GM10248 (cell line): ENCODE measurements at regions of chr17 and their contacts with region 1.

Region 1: GRCh38 chr17:42577532-42578281 is at the start of gene PSMC3IP:
- DNase-seq: peak; percentile 98
- CTCF ChIP-seq: peak; percentile 36

Region 2: GRCh38 chr17:42548070-42548837 is 29.5 kb before region 1 on chr17:
- CTCF ChIA-PET with region 1: interaction called, 11 read pairs
- POLR2A ChIA-PET with region 1: no interaction called
- DNase-seq: peak; percentile 93
- CTCF ChIP-seq: peak; percentile 77

Region 3: GRCh38 chr17:42609182-42609813 is 31.6 kb after region 1 on chr17 and contains the starts of genes RETREG3 and TUBG1:
- CTCF ChIA-PET with region 1: interaction called, 120 read pairs
- POLR2A ChIA-PET with region 1: interaction called, 5 read pairs
- DNase-seq: peak; percentile 100
- CTCF ChIP-seq: no peak

Region 4: DNA sequence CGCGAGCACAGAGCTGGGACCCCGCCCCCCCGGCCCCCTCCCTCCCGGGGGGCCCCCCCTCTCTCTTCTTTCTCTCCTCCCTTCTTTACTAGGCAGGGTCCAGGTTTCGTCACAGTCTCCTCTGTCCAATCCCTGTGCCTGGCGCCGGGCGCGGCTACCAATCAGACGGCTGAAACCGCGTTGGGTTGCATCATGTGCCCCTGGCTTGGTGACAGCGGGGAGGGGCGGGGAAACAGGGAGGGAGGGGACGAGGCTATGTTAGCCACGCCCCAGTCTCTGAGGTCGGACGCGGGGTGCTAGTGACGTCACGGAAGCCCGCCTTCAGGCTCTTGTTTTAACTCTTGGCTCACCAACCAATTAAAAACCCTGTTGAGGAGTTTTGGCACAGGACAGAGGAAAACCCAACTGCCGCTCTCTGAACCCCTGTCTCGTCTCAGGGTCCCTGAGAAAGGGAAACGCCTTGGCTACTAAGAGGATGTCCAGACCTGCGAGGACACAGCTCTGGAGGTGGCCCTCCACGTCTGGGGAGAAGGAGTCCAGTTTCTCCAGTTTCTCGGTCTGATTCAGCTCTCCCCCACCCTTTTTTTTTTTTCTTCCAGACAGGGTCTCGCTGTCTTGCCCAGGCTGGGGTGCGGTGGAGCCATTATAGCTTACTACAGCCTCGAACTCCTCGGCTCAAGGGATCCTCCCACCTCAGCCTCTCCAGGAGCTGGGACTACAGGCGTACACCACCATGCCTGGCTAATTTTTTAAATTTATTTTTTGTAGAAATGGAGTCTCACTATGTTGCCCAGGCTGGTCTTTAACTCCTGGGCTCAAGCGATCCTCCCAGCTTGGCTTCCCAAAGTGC is 99.5 kb after region 1 on chr17:
- CTCF ChIA-PET with region 1: interaction called, 97 read pairs
- POLR2A ChIA-PET with region 1: interaction called, 5 read pairs
- DNase-seq: peak; percentile 98
- CTCF ChIP-seq: no peak

Region 5: GRCh38 chr17:42720996-42721583 is 143.4 kb after region 1 on chr17:
- CTCF ChIA-PET with region 1: interaction called, 11 read pairs
- POLR2A ChIA-PET with region 1: no interaction called
- DNase-seq: peak; percentile 75
- CTCF ChIP-seq: peak; percentile 73

Region 6: DNA sequence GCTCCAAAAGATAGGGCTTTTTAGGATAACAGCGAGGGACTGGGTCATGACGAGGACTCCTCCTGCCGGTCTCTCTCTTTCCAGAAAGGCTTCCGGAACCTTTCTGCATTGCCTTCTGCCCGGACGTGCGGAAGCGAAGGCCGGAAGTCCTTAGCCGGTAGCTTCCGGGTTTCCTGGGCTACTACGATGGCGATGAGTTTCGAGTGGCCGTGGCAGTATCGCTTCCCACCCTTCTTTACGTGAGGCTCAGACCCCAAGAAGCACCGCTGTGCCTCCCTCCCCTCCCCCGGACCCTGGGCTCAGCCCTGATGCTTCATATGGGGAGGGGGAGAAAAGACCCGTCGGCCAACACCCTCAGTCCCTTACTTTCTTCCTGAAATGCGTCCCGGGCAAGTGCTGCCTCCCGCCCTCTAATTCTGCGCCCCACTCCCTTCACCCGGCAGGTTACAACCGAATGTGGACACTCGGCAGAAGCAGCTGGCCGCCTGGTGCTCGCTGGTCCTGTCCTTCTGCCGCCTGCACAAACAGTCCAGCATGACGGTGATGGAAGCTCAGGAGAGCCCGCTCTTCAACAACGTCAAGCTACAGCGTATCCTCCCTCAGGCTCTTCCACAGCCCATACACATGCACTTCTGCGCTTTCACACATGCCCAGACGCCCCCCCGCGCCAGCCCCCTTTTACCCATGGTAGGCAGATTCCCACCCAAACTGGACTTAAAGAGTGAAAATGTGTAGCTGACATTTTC is 195.8 kb after region 1 on chr17 and contains the start of gene VPS25:
- CTCF ChIA-PET with region 1: interaction called, 19 read pairs
- POLR2A ChIA-PET with region 1: no interaction called
- DNase-seq: peak; percentile 88
- CTCF ChIP-seq: no peak